ENCODE measurements at regions of chr4 and their contacts with region 1.

Region 1: DNA sequence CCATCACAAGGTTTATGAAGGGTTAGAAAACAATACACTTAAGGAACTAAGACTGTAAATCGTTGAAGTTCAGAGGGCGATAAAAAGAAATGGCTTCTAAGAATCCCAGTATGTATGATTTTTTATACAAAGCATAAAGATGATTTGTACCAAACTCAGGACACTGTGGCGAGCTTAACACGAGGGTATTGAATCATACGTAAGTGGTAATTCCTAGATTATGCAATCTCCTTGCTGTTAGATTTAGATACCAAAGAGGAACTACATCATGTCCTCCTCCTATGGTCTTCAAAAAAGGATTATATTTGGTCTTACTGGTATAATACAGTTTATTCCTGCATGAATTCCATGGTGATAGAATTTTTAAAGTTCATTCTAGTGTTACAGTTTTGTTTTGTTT is 23.9 kb downstream of the NFKB1 start:
- DNase-seq: no peak
- ATAC-seq: no peak
- H3K4me3 Mint-ChIP-seq: peak overlapping the region; percentile 37
- H3K27ac Mint-ChIP-seq: peak overlapping the region; percentile 88
- H3K4me1 Mint-ChIP-seq: peaks cover 91% of the 10 kb centered on the region
- H3K27me3 Mint-ChIP-seq: no peaks in the 10 kb centered on the region

Region 2: DNA sequence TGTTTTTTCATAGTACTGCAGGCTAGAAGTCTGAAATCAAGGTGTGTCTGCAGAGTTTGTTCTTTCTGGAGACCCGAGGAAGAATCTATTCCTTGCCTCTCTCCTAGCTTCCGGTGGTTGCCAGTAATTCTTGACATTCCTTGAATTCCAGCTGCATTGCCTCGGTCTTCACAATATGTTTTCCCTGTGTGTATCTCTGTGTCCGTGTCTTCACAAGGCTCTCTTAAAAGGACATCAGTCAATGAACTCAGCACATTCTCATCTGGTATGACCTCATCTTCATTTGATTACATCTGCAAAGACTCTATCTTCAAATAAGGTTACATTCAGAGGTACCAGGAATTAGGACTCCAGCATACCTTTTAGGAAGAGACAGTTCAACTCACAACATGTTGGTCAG is 571.1 kb before region 1 on chr4:
- CTCF ChIA-PET with region 1: no interaction called
- POLR2A ChIA-PET with region 1: no interaction called
- intact Hi-C with region 1: no loop called
- DNase-seq: no peak
- ATAC-seq: no peak
- H3K4me3 Mint-ChIP-seq: no peak overlapping the region
- H3K27ac Mint-ChIP-seq: no peak overlapping the region
- H3K4me1 Mint-ChIP-seq: no peaks in the 10 kb centered on the region
- H3K27me3 Mint-ChIP-seq: no peaks in the 10 kb centered on the region

Region 3: DNA sequence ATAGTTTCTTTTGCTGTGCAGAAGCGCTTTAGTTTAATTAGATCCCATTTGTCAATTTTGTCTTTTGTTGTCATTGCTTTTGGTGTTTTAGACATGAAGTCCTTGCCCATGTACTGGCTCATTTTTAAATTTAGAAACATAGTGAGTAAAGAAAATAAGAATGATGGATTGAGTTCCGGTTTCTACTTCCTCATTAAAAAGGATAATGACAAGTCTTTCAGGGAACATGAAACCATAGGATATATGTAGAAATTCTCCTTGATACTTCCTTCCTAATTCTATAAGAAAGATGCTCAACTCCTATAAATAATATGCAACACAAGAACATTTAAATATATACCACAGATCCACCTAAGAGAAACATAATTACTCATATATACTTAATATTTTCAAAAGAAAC is 493.7 kb before region 1 on chr4:
- CTCF ChIA-PET with region 1: no interaction called
- POLR2A ChIA-PET with region 1: no interaction called
- intact Hi-C with region 1: no loop called
- DNase-seq: no peak
- ATAC-seq: no peak
- H3K4me3 Mint-ChIP-seq: no peak overlapping the region
- H3K27ac Mint-ChIP-seq: no peak overlapping the region
- H3K4me1 Mint-ChIP-seq: no peaks in the 10 kb centered on the region
- H3K27me3 Mint-ChIP-seq: no peaks in the 10 kb centered on the region

Region 4: DNA sequence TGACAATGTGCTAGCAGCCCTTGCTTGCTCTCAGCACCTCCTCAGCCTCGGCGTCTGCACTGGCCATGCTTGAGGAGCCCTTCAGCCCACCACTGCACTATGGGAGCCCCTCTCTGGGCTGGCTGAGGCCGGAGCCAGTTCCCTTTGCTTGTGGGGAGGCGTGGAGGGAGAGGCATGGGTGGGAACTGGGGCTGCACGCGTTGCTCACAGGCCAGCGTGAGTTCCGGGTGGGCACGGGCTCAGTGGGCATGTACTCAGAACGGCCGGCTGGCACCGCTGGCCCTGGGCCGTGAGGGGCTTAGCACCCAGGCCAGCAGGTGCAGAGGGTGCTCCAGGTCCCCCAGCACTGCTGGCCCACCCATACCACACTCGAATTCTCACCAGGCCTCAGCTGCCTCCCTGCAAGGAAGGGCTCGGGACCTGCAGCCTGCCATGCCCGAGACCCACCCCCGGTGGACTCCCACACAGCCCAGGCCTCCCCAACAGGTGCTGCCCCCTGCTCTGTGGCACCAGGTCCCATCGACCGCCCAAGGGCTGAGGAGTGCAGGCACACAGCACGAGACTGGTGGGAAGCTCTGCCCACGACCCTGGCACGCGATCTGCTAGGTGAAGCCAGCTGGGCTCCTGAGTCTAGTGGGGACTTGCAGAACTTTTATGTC is 280.1 kb before region 1 on chr4:
- CTCF ChIA-PET with region 1: no interaction called
- POLR2A ChIA-PET with region 1: no interaction called
- intact Hi-C with region 1: no loop called
- DNase-seq: no peak
- ATAC-seq: no peak
- H3K4me3 Mint-ChIP-seq: no peak overlapping the region
- H3K27ac Mint-ChIP-seq: no peak overlapping the region
- H3K4me1 Mint-ChIP-seq: no peaks in the 10 kb centered on the region
- H3K27me3 Mint-ChIP-seq: no peaks in the 10 kb centered on the region

Region 5: DNA sequence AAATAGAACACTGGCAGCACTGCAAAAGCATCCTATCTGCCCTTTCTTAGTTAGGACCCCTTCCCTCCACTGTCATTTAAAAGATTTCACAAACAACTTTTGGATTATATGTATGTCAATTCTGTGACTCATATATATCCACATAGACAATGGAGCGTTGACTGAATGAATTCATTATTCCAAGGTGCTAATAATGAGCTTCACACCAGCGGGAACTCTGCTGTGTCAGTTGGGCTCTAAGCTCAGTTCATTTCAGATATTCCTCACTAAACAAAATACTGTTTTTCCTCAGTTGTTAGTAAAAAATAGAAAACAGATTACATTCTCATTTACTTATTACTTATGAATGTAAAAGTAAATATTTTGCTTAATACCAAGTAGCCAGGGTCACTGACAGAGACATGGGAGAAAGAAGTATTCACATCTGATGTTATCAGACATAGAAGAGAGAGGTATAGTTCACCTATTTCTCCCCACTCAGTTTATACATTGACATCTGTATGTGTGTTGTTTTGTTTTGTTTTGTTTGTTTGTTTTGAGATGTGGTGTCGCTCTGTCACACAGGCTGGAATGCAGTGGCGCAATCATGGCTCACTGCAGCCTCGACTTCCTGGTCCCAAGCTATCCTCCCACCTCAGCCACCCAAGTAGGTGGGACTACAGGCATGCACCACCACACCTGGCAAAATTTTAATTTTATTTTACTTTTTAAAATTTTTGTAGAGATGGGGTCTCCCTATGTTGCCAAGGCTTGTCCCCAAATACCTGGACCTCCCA is 13.1 kb before region 1 on chr4:
- CTCF ChIA-PET with region 1: interaction called, 17 read pairs
- POLR2A ChIA-PET with region 1: interaction called, 3 read pairs
- intact Hi-C with region 1: no loop called
- DNase-seq: no peak
- ATAC-seq: no peak
- H3K4me3 Mint-ChIP-seq: no peak overlapping the region
- H3K27ac Mint-ChIP-seq: no peak overlapping the region
- H3K4me1 Mint-ChIP-seq: peaks cover 78% of the 10 kb centered on the region
- H3K27me3 Mint-ChIP-seq: no peaks in the 10 kb centered on the region

Region 6: DNA sequence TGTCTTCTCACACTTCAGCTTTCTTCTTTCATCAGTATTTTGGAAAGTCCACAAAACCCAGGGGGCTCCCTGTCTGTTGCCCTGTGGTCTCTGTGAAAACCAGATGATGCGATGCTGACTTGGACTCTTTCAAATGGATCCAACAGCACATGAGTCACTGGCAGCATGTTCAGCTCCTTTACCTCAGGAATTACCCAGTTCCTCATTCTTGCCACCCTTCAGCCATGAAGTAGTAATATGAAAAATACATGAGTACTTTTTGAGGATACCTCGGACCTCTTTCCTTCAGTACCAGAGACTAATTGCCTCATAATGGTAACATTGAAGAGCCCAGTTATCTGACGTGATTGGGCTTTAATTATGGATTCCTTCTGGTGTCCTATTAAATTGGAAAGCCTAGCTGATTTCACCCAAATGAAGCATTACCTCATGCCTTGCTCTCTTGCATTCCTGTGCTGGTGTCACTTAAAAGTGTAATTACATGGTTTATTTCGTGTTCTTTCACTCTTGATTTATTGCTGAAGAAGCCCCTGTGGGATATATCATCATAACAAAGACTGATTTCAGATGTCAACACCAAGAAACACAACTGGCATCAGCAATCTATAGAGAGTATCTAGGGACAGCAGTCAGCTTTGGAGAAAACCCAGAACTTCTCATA is 39.4 kb after region 1 on chr4:
- CTCF ChIA-PET with region 1: no interaction called
- POLR2A ChIA-PET with region 1: no interaction called
- intact Hi-C with region 1: loop called in 1 of 2 experiments (anchors 5 kb)
- DNase-seq: peak; percentile 59
- ATAC-seq: peak; percentile 51
- H3K4me3 Mint-ChIP-seq: no peak overlapping the region
- H3K27ac Mint-ChIP-seq: peak overlapping the region; percentile 85
- H3K4me1 Mint-ChIP-seq: peaks cover 84% of the 10 kb centered on the region
- H3K27me3 Mint-ChIP-seq: no peaks in the 10 kb centered on the region

Region 7: GRCh38 chr4:102610007-102610406 is 84.9 kb after region 1 on chr4:
- CTCF ChIA-PET with region 1: no interaction called
- POLR2A ChIA-PET with region 1: no interaction called
- intact Hi-C with region 1: loop called in 1 of 2 experiments (anchors 5 kb)
- DNase-seq: no peak
- ATAC-seq: no peak
- H3K4me3 Mint-ChIP-seq: no peak overlapping the region
- H3K27ac Mint-ChIP-seq: peak overlapping the region; percentile 35
- H3K4me1 Mint-ChIP-seq: peaks cover 77% of the 10 kb centered on the region
- H3K27me3 Mint-ChIP-seq: no peaks in the 10 kb centered on the region